HAP-1 (cell line): ENCODE measurements at regions of chr2 and their contacts with region 1.

Region 1: GRCh38 chr2:182980115-182980514 is 58.1 kb downstream of the NCKAP1 start:
- DNase-seq: peak in 1 of 2 experiments; percentile 76
- H3K4me3 ChIP-seq: no peak overlapping the region
- H3K4me1 ChIP-seq: no peaks in the 10 kb centered on the region
- H3K27me3 ChIP-seq: no peaks in the 10 kb centered on the region

Region 2: GRCh38 chr2:182666674-182667314 is 313.3 kb before region 1 on chr2:
- in situ Hi-C with region 1: no loop called
- DNase-seq: peak; percentile 23 to 28
- H3K4me3 ChIP-seq: no peak overlapping the region
- H3K4me1 ChIP-seq: no peaks in the 10 kb centered on the region
- H3K27me3 ChIP-seq: no peaks in the 10 kb centered on the region

Region 3: DNA sequence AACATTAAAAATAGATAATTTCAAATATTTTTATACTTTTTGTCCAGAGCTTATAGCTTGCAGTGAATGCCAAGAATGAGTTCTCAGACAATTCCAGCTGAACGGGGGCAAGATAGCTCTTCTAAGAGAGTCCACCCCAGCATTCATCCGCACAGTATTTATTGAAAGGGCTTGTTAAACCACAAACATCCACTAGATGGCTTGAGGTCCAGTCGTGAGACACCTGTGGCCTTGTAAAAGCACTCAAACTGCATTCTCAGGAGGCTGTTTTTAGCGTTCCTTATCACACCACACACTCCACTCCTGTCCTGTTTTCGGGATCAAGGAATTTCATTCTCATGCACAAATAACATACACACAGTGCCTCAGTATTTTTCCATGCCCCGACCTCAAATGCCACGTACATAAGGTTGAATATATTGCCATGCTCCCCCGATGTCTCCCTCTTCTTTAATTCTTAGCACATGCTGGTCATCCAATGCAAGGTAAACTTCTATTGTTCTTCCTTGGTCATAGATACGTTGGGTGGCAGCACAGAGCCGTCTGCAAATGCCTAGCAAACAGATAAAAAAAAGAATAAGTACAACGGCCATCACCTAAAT is 216.7 kb before region 1 on chr2:
- in situ Hi-C with region 1: loop called (anchors 25 kb)
- DNase-seq: peak; percentile 44 to 48
- H3K4me3 ChIP-seq: no peak overlapping the region
- H3K4me1 ChIP-seq: no peaks in the 10 kb centered on the region
- H3K27me3 ChIP-seq: no peaks in the 10 kb centered on the region